HEK293 (cell line): ENCODE measurements at regions of chr1 and their contacts with region 1.

Region 1: GRCh38 chr1:228734881-228735801 is at the start of gene RHOU:
- H3K4me3 ChIP-seq: peak within 1 kb of the TSS; percentile 84
- H3K27ac ChIP-seq: peak within 1 kb of the TSS; percentile 97
- H3K4me1 ChIP-seq: peaks cover 12% of the 10 kb centered on the region
- CTCF ChIP-seq: peak; percentile 76

Region 2: GRCh38 chr1:228691926-228692325 is 43.2 kb before region 1 on chr1:
- CTCF ChIA-PET with region 1: interaction called, 12 read pairs
- POLR2A ChIA-PET with region 1: interaction called, 4 read pairs
- H3K4me3 ChIP-seq: no peak overlapping the region
- H3K27ac ChIP-seq: no peak overlapping the region
- H3K4me1 ChIP-seq: peaks cover 7% of the 10 kb centered on the region
- CTCF ChIP-seq: peak; percentile 24; the same call in 1 of the 2 replicates